ENCODE measurements at regions of chr14 and their contacts with region 1.

Region 1: GRCh38 chr14:64720131-64720576 is 15.9 kb downstream of the PLEKHG3 start:
- DNase-seq: no peak
- H3K4me3 Mint-ChIP-seq: no peak overlapping the region
- H3K27ac Mint-ChIP-seq: peak overlapping the region; percentile 96
- H3K4me1 Mint-ChIP-seq: peaks cover 98% of the 10 kb centered on the region
- H3K27me3 Mint-ChIP-seq: no peaks in the 10 kb centered on the region

Region 2: GRCh38 chr14:64540208-64541157 is 179.7 kb before region 1 on chr14 and contains the start of gene HSPA2:
- CTCF ChIA-PET with region 1: no interaction called
- POLR2A ChIA-PET with region 1: no interaction called
- DNase-seq: peak; percentile 97
- H3K4me3 Mint-ChIP-seq: peak within 1 kb of the TSS; percentile 94
- H3K27ac Mint-ChIP-seq: peak within 1 kb of the TSS; percentile 91
- H3K4me1 Mint-ChIP-seq: peaks cover 36% of the 10 kb centered on the region
- H3K27me3 Mint-ChIP-seq: peaks cover 45% of the 10 kb centered on the region
- total RNA-seq, gene HSPA2: 6.8 to 7.1 TPM

Region 3: DNA sequence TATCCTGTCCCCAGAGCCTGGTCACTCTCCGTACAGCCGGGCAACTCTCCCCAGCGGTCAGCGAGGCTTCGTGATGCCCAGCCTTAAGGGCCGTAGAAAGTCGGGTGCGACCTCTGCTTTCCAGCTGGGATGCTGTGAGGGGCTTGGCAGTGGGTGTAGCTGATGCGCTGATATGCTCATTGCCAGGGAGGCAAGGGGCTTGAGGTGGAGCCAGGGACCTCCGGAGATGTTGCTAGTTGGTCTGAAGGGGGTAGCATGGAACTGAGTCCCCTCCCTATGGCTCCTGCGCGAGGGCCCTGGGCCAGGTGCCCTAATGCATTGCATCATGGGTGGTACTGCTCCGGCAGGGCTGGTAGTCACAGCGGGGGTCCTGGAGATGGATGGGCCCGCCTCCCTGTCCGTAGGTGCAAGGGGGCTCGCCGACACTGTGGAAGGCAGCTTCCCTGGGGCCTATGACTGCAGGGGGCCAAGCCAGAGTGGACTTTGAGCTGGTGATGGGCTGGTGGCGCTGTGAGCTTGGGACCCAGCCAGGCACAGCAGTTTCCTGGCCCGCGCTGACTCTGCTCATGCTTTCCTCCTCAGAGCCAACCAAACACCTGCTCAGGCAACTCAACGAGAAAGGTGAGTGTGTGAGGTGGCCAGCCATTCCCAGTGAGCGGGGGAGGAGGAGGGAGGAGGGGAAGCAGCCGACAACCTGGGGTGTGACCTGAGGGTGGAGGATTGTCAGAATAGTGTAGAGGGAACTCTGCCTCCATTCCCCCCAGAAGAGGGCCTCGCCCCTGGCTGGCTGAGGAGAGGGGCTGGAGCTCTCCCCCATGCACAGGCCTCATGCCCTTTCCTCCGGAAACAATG is 16.3 kb after region 1 on chr14:
- CTCF ChIA-PET with region 1: interaction called, 4 read pairs
- POLR2A ChIA-PET with region 1: interaction called, 29 read pairs
- DNase-seq: no peak
- H3K4me3 Mint-ChIP-seq: no peak overlapping the region
- H3K27ac Mint-ChIP-seq: no peak overlapping the region
- H3K4me1 Mint-ChIP-seq: peaks cover 32% of the 10 kb centered on the region
- H3K27me3 Mint-ChIP-seq: no peaks in the 10 kb centered on the region

Region 4: GRCh38 chr14:64745511-64746091 is 25.4 kb after region 1 on chr14:
- CTCF ChIA-PET with region 1: interaction called, 4 read pairs
- POLR2A ChIA-PET with region 1: interaction called, 12 read pairs
- DNase-seq: no peak
- H3K4me3 Mint-ChIP-seq: no peak overlapping the region
- H3K27ac Mint-ChIP-seq: peak overlapping the region; percentile 53
- H3K4me1 Mint-ChIP-seq: peaks cover 39% of the 10 kb centered on the region
- H3K27me3 Mint-ChIP-seq: no peaks in the 10 kb centered on the region